Transverse colon (tissue), 4 donors: ENCODE measurements at regions of chr10 and their contacts with region 1.

Region 1: DNA sequence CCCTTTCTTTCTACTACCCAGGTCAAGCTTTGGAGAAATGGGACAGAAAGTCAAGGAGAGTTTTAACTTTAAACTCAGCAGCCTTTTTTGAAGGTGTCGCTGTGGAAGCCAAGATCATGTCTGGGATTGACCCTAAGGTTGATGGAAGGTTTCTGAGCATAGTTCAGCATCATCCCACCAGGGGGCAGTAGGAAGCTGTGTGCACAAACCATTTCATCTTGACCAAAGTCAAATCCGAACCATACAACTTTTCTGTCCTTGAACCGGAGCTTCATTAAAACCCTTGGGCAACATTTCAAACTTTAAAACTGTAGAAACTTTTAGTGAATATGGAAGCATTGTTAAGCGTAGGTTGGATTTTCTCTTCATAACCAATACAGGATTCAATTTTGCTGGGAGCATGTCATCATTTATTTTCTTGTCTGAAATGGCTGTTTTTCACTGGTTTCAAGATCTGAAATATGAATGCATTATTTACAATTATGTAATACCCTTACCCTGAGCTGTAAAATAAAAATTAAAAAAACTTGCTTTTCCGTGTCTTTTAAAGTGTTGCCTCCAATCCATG is 214.4 kb upstream of the KIAA1217 start:
- DNase-seq: peak; percentile 52
- H3K4me3 ChIP-seq: no peak overlapping the region
- H3K27ac ChIP-seq: no peak overlapping the region
- H3K4me1 ChIP-seq: no peaks in the 10 kb centered on the region
- H3K27me3 ChIP-seq: no peaks in the 10 kb centered on the region
- CTCF ChIP-seq: peak; percentile 71 to 79 (median 74)
- EP300 ChIP-seq: no peak
- POLR2A ChIP-seq: no peak

Region 2: DNA sequence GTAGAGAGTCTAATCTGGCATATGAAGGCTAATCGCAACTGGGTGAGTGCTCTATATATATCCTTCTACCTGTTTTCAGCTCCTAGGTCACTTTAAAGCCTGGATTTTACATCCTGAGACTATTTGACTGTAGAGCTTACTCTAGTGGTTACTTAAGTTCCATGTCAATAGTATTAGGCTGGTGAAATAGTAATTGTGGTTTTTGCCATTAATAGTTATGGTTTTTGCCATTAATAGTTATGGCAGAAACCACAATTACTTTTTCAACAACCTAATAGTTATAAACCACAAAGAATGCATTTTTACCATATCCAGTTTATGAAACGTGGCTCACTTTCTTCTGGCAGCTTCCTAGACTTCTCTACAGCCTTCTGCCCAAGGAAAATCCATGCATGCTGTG is 48.7 kb before region 1 on chr10:
- in situ Hi-C with region 1: no loop called
- intact Hi-C with region 1: no loop called
- DNase-seq: no peak
- H3K4me3 ChIP-seq: no peak overlapping the region
- H3K27ac ChIP-seq: no peak overlapping the region
- H3K4me1 ChIP-seq: no peaks in the 10 kb centered on the region
- H3K27me3 ChIP-seq: no peaks in the 10 kb centered on the region
- CTCF ChIP-seq: no peak
- EP300 ChIP-seq: no peak
- POLR2A ChIP-seq: no peak

Region 3: DNA sequence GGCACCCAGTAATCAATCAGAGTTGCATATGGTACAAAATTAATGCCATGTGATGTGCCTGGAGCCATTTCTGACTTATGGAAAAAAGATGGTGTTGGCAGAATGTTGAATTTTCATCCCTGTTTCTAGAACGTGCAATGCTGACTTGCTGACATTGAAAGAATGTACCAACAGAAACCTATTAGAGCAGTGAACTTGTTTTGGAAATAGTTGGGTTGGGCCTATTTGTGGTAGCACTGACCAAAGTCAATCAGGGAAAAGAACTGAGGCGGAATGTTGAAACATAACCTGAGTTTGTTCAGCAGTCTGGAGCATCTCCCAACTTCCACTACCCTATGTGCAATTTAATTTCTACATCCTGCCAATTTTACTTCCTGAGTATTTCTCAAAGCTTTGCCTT is 202.7 kb after region 1 on chr10:
- in situ Hi-C with region 1: loop called in 3 of 4 experiments (anchors 10 to 25 kb)
- intact Hi-C with region 1: loop called (anchors 5 kb)
- DNase-seq: no peak
- H3K4me3 ChIP-seq: no peak overlapping the region
- H3K27ac ChIP-seq: no peak overlapping the region
- H3K4me1 ChIP-seq: peaks cover 0 to 10% (median 4%) of the 10 kb centered on the region in 4 donors
- H3K27me3 ChIP-seq: no peaks in the 10 kb centered on the region
- CTCF ChIP-seq: no peak
- EP300 ChIP-seq: no peak
- POLR2A ChIP-seq: no peak

Region 4: DNA sequence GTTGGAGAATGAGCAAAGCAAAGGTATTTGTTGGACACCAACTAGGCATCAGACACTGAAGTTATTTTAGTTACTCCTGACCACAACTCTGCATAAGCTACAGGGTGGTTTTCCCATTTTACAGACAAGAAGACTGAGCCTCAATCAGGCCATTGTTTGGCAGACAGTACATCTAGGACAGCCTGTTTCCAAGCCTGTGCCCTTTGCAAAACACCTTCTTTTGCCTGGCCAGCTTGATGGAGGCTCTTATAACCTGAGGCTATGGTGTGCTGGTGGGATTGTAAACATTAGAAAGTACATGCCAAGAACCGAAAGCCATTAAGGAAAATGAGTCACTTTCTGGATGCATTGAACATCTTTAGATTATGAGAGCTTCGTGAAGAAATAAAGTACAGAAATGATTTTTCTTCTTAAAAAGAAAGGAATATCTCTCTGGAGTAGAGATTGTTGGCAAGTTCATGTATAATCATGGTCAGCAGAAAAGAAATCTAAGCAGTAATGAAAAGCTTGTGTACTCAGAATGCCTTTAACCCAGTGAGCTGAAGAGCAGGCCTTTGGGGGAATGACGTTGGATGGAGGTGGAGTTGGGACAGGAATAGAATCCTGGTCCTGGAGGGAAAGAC is 354.9 kb after region 1 on chr10:
- in situ Hi-C with region 1: loop called in 3 of 4 experiments (anchors 10 to 25 kb)
- intact Hi-C with region 1: no loop called
- DNase-seq: no peak
- H3K4me3 ChIP-seq: no peak overlapping the region
- H3K27ac ChIP-seq: no peak overlapping the region
- H3K4me1 ChIP-seq: peaks cover 0 to 7% (median under 1%) of the 10 kb centered on the region in 4 donors
- H3K27me3 ChIP-seq: no peaks in the 10 kb centered on the region
- CTCF ChIP-seq: no peak
- EP300 ChIP-seq: no peak
- POLR2A ChIP-seq: no peak

Region 5: DNA sequence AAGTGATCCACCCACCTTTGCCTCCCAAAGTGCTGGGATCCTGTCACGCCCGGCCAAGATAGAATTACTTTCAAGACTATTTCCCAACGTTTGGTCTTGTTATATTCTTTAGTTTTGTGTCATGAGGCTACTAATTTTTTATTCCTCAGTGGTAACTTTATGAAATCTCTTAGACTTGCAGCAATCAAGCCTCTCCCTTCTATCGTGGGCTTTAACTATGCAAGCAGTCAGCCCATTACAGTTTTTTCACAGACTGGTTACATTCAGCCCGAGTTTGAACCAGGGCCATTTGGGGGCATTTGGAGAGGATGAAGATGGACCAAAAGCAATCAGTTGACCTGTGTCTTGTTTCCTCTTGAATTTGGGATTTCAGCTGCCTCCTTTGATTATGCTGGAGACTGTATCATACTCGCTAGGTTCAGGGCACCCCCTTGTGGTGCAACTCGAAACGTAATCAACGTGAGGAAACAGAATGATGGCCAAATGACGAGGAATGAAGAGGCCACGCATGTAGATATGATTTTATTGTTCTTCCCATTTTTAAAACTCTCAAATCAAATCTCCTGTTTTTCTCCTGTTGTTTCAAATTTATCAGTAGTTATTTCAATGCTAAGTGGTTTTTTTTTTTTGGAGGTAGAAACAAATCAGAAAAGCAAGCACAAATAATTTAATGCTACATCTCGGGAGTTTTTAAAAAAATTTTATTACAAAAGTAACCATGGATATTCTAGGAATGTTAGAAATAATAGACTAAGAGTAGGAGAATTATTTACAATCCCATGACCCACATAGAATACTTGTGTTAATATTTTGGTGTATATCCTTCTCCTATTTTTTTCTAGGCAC is 365.9 kb after region 1 on chr10:
- in situ Hi-C with region 1: loop called in 3 of 4 experiments (anchors 10 to 25 kb)
- intact Hi-C with region 1: no loop called
- DNase-seq: peak; percentile 73
- H3K4me3 ChIP-seq: no peak overlapping the region
- H3K27ac ChIP-seq: no peak overlapping the region
- H3K4me1 ChIP-seq: no peaks in the 10 kb centered on the region
- H3K27me3 ChIP-seq: no peaks in the 10 kb centered on the region
- CTCF ChIP-seq: peak; percentile 58 to 61 (median 59)
- EP300 ChIP-seq: no peak
- POLR2A ChIP-seq: no peak

Region 6: DNA sequence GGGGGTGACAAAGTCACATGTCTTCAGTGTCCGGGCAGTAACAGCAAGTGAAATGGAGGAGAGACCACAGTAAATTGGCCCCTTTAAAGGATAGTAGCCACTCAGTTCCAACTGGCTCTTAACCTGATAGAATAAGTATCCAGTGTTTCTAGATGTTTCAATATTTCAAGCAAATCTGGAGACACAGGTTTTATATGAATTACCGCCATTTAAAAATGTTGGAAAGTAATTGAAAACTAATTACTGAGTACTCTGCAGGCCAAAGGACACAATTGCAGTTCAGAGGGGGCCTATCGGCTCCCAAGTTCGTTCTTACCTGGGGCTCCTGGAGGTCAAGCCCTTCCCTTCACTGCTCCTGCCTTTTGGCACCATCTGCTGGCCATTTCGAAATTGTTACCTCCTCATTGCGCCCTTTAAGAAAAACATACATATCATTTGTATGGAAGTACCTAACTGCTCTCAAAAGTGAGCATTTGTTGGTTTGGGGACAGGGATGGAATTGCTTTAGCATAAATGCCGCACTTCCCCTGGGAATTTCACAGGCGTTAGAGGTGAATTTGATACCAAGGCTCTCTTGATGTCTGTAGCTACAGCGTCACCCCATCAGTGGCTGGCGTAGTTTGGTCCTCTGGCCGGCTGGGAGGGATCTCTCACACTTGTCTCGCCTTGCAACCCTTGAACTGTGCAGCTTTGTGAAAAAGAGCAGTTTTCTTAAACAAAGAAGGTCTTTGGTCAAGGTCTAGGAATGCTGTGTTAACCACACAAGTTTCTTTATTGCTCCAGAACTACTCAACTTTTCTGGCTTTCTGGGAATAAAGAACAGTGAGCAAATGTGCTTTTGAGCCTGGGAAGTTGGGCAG is 509.1 kb after region 1 on chr10:
- in situ Hi-C with region 1: loop called in 3 of 4 experiments (anchors 25 kb)
- intact Hi-C with region 1: no loop called
- DNase-seq: peak; percentile 65
- H3K4me3 ChIP-seq: no peak overlapping the region
- H3K27ac ChIP-seq: no peak overlapping the region
- H3K4me1 ChIP-seq: peaks cover 0 to 4% (median 0%) of the 10 kb centered on the region in 4 donors
- H3K27me3 ChIP-seq: no peaks in the 10 kb centered on the region
- CTCF ChIP-seq: peak; percentile 37 to 71 (median 60)
- EP300 ChIP-seq: no peak
- POLR2A ChIP-seq: no peak

Region 7: GRCh38 chr10:24518981-24519597 is 524.5 kb after region 1 on chr10:
- in situ Hi-C with region 1: loop called (anchors 10 to 25 kb)
- intact Hi-C with region 1: loop called (anchors 5 kb)
- DNase-seq: peak; percentile 56
- H3K4me3 ChIP-seq: no peak overlapping the region
- H3K27ac ChIP-seq: no peak overlapping the region
- H3K4me1 ChIP-seq: no peaks in the 10 kb centered on the region
- H3K27me3 ChIP-seq: no peaks in the 10 kb centered on the region
- CTCF ChIP-seq: peak; percentile 59 to 76 (median 74)
- EP300 ChIP-seq: no peak
- POLR2A ChIP-seq: no peak